PC-9 (cell line): ENCODE measurements at regions of chr6 and their contacts with region 1.

Region 1: GRCh38 chr6:5730585-5731263 is 276.0 kb downstream of the NRN1 start:
- DNase-seq: no peak
- H3K4me3 ChIP-seq: no peak overlapping the region
- H3K27ac ChIP-seq: no peak overlapping the region
- H3K4me1 ChIP-seq: no peaks in the 10 kb centered on the region
- H3K27me3 ChIP-seq: no peaks in the 10 kb centered on the region
- CTCF ChIP-seq: no peak

Region 2: GRCh38 chr6:5744497-5744896 is 13.8 kb after region 1 on chr6:
- CTCF ChIA-PET with region 1: no interaction called
- POLR2A ChIA-PET with region 1: interaction called, 11 read pairs
- intact Hi-C with region 1: no loop called
- DNase-seq: no peak
- H3K4me3 ChIP-seq: no peak overlapping the region
- H3K27ac ChIP-seq: no peak overlapping the region
- H3K4me1 ChIP-seq: no peaks in the 10 kb centered on the region
- H3K27me3 ChIP-seq: no peaks in the 10 kb centered on the region
- CTCF ChIP-seq: no peak

Region 3: DNA sequence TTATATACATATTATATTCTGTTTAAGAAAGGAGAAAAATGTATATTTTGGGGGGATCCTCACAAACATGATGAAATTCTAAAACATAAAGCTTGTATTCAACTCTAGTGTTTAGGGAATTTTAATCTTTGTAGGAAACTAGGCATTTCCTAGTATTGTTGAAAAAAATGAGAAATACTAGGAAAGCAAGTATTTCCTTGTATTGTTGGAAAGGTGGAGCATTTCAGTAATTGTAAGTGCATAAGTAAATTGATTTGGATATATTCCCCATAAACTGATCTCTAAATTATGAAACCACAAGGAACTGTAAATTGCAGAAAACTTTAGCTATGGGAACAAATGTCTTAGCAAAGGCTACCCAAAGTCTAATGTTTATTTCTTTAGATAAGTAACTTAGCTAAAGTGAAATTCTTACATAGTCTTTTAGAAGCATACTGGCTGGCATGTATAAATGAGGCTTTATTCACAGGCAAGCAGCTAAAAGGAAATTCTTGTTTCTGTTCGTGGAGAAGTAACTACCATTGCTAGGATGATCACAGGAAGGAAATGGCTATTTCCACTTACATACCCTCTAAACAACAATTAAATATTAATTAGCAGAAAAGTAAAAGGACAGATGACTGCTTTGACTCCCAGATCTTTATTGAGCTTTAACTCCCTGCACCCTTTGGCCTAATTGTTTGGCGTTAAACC is 295.9 kb after region 1 on chr6:
- CTCF ChIA-PET with region 1: no interaction called
- POLR2A ChIA-PET with region 1: no interaction called
- intact Hi-C with region 1: no loop called
- DNase-seq: no peak
- H3K4me3 ChIP-seq: no peak overlapping the region
- H3K27ac ChIP-seq: no peak overlapping the region
- H3K4me1 ChIP-seq: no peaks in the 10 kb centered on the region
- H3K27me3 ChIP-seq: peaks cover 10% of the 10 kb centered on the region
- CTCF ChIP-seq: no peak